B cell (primary cell): ENCODE measurements at regions of chr6 and their contacts with region 1.

Region 1: GRCh38 chr6:80106418-80107235 is at the start of gene BCKDHB:
- DNase-seq: peak; percentile 99
- ATAC-seq: peak; percentile 98
- H3K4me3 ChIP-seq: peak within 1 kb of the TSS; percentile 52 to 93 (median 83)
- H3K4me3 Mint-ChIP-seq: peak within 1 kb of the TSS; percentile 93
- H3K27ac ChIP-seq: peak within 1 kb of the TSS in 1 of 2 donors; percentile 67
- H3K27ac Mint-ChIP-seq: peak within 1 kb of the TSS; percentile 91
- H3K4me1 ChIP-seq: peaks cover 4 to 12% of the 10 kb centered on the region in 2 donors
- H3K4me1 Mint-ChIP-seq: peaks cover 13% of the 10 kb centered on the region
- H3K27me3 ChIP-seq: peaks cover 0 to 19% (median 5%) of the 10 kb centered on the region in 4 experiments
- H3K27me3 Mint-ChIP-seq: peaks cover 11% of the 10 kb centered on the region
- CTCF ChIP-seq: no peak
- total RNA-seq, gene BCKDHB: 20.1 and 21.4 TPM in 2 replicates

Region 2: DNA sequence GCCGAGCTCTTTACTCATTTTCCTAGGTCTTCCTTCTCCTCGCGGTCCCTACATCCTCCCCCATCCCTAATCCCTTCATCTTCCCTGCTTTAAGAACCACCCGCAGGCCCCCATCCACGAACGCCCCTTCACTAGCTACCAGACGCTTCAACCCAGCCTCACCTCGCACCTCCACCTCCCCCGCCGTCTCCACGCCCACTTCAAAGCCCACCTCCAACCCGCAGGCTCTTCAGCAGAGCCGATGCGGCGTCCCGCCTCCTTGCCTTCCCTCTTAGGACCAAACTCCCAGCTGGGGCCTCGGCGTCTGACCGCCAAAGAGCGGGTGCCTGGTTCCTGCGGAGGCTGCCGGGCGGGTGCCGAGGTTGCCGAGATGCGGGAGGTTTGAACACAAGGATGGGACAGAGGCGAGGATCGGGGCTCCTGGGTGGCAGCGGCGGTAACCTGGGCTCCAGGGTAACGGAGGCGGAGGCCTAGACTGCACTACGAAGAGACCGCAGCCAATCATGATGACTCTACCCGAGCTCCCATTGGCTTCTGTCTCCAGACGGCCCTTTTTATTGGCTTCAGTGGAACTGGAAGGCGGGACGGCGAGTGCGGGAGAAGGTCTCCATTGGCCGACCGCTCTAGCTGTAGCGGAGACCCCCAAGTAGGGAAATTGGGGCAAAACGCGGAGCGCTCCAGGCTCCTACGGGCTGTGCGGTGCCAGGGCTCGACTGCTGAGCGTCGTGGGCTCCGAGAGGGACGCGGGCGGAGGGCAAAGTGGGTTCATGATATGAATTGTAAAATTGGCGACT is 569.5 kb before region 1 on chr6 and contains the start of gene LCA5:
- CTCF ChIA-PET with region 1: no interaction called
- POLR2A ChIA-PET with region 1: no interaction called
- intact Hi-C with region 1: loop called (anchors 1 kb)
- DNase-seq: peak; percentile 92
- ATAC-seq: peak; percentile 97
- H3K4me3 ChIP-seq: peak within 1 kb of the TSS; percentile 63 to 92 (median 81)
- H3K4me3 Mint-ChIP-seq: no peak within 1 kb of the TSS
- H3K27ac ChIP-seq: peak within 1 kb of the TSS; percentile 31 to 59
- H3K27ac Mint-ChIP-seq: no peak within 1 kb of the TSS
- H3K4me1 ChIP-seq: peaks cover 12 to 15% of the 10 kb centered on the region in 2 donors
- H3K4me1 Mint-ChIP-seq: no peaks in the 10 kb centered on the region
- H3K27me3 ChIP-seq: peaks cover 0 to 5% (median 0%) of the 10 kb centered on the region in 4 experiments
- H3K27me3 Mint-ChIP-seq: peaks cover 9% of the 10 kb centered on the region
- CTCF ChIP-seq: no peak
- total RNA-seq, gene LCA5: 0.91 and 0.92 TPM in 2 replicates